A673 (cell line): ENCODE measurements at regions of chr2 and their contacts with region 1.

Region 1: DNA sequence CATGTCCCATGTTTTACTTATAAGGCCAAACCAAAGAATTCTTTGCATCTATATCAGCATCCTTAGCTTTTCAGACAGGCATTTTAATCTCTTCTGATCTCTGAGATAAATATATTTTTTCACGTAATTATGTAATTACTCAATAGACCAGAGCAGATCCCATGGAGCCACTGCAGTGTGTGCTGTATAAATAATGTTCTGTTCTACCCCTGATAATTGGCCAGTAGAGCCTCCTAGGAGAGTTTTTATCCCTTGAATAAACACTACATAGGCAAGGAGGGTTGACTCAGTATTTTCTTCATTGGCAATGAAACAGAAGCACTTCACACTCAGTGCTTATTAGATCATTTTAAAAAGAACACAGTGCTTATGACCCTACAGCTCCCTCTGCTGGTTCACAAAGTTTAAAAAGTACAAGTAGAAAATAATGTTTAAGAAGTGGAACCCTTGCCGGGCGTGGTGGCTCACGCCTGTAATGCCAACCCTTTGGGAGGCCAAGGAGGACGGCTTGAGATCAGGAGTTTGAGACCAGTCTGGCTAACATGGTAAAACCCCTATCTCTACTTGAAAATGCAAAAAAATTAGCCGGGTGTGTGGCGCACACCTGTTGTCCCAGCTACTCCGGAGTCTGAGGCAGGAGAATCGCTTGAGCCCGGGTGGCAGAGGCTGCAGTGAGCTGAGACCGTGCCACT is 91.9 kb downstream of the PPP1R1C start:
- DNase-seq: peak; percentile 93
- H3K4me3 ChIP-seq: no peak overlapping the region
- H3K27ac ChIP-seq: no peak overlapping the region
- H3K4me1 ChIP-seq: peaks cover 19% of the 10 kb centered on the region
- H3K27me3 ChIP-seq: no peaks in the 10 kb centered on the region
- CTCF ChIP-seq: peak; percentile 72

Region 2: GRCh38 chr2:181904022-181904632 is 173.5 kb before region 1 on chr2:
- CTCF ChIA-PET with region 1: interaction called, 5 read pairs
- POLR2A ChIA-PET with region 1: no interaction called
- intact Hi-C with region 1: loop called (anchors 5 kb)
- DNase-seq: peak; percentile 76
- H3K4me3 ChIP-seq: no peak overlapping the region
- H3K27ac ChIP-seq: peak overlapping the region; percentile 51
- H3K4me1 ChIP-seq: peaks cover 31% of the 10 kb centered on the region
- H3K27me3 ChIP-seq: no peaks in the 10 kb centered on the region
- CTCF ChIP-seq: peak; percentile 82

Region 3: GRCh38 chr2:181970160-181970794 is 107.3 kb before region 1 on chr2:
- CTCF ChIA-PET with region 1: no interaction called
- POLR2A ChIA-PET with region 1: no interaction called
- intact Hi-C with region 1: loop called (anchors 5 kb)
- DNase-seq: no peak
- H3K4me3 ChIP-seq: no peak overlapping the region
- H3K27ac ChIP-seq: no peak overlapping the region
- H3K4me1 ChIP-seq: peaks cover 11% of the 10 kb centered on the region
- H3K27me3 ChIP-seq: no peaks in the 10 kb centered on the region
- CTCF ChIP-seq: peak; percentile 44

Region 4: DNA sequence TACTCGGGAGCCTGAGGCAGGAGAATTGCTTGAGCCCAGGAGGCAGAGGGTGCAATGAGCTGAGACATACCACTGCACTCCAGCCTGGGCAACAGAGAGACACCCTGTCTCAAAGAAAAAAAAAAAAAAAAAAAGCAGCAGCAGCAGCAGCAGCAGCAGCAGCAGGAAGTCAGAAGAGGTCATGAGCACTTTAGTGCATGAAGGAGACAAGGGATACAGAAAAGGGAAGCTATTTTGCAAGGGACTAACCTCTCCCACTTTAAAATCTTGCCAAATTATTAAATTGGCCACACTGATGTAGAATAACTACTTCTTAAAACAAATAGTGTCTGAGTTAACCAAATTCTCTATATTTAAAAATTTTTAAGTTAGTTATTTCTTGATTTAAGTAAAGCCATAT is 462.7 kb after region 1 on chr2:
- CTCF ChIA-PET with region 1: no interaction called
- POLR2A ChIA-PET with region 1: no interaction called
- intact Hi-C with region 1: no loop called
- DNase-seq: no peak
- H3K4me3 ChIP-seq: no peak overlapping the region
- H3K27ac ChIP-seq: no peak overlapping the region
- H3K4me1 ChIP-seq: no peaks in the 10 kb centered on the region
- H3K27me3 ChIP-seq: no peaks in the 10 kb centered on the region
- CTCF ChIP-seq: no peak